ENCODE measurements at regions of chr19 and their contacts with region 1.

Region 1: DNA sequence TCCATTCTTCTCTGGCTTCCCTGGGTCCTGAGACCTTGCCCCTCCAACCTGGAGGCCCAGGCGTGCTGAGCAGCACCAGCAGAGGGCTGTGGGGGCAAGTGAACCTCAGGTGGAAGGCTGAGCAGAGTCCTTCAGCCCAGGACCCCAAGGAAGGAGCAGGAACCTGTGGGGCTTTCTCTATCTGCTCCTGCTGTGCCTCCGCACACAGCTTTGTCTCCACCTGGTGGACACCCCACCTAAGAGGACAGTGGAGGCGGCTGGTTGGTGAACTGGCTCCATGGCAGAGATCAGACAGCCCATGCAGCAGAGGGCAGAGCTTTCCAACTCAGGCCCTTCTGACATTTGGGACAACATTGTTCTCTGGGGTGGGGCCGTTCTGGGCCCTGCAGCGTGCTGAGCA is 19.7 kb downstream of the ZFR2 start:
- DNase-seq: no peak
- H3K4me3 ChIP-seq: no peak overlapping the region
- H3K27ac ChIP-seq: no peak overlapping the region
- H3K4me1 ChIP-seq: no peaks in the 10 kb centered on the region
- H3K27me3 ChIP-seq: no peaks in the 10 kb centered on the region
- CTCF ChIP-seq: peak; percentile 56 to 75 (median 71)
- EP300 ChIP-seq: no peak
- POLR2A ChIP-seq: no peak
- RAD21 ChIP-seq: peak; percentile 41 to 63; a peak in 3 of 4 replicates

Region 2: GRCh38 chr19:3838661-3839060 is 10.4 kb before region 1 on chr19:
- CTCF ChIA-PET with region 1: interaction called, 21 read pairs
- POLR2A ChIA-PET with region 1: no interaction called
- DNase-seq: no peak
- H3K4me3 ChIP-seq: no peak overlapping the region
- H3K27ac ChIP-seq: no peak overlapping the region
- H3K4me1 ChIP-seq: no peaks in the 10 kb centered on the region
- H3K27me3 ChIP-seq: no peaks in the 10 kb centered on the region
- CTCF ChIP-seq: no peak
- EP300 ChIP-seq: no peak
- POLR2A ChIP-seq: no peak
- RAD21 ChIP-seq: no peak

Region 3: DNA sequence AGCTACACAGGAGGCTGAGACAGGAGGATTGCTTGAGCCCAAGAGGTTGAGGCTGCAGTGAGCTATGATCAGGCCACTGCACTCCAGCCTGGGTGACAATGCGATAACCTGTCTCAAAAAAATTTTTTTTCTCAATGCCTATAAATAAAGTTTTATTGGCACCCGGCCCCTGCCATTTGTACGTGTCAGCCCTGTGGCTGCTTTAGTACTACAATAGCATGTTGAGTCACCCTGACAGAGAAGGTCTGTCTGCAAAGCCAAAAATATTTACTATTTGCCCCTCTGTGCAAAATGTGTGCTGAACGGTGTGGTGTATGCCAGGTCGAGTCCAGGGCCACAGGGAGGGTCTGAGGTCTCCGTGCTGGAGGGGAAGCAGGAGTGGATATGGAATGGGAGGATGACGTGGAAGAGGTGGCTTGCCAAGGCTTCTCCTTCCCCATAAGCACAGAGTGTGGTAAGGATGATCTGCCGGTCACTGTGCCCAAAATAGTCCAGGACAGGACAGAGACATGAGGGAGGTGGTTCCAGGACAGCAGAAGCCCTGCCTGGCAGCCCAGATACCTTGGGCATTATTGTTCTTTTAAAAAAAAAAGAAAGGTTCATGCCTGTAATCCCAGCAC is 93.8 kb after region 1 on chr19:
- CTCF ChIA-PET with region 1: no interaction called
- POLR2A ChIA-PET with region 1: no interaction called
- DNase-seq: no peak
- H3K4me3 ChIP-seq: no peak overlapping the region
- H3K27ac ChIP-seq: no peak overlapping the region
- H3K4me1 ChIP-seq: no peaks in the 10 kb centered on the region
- H3K27me3 ChIP-seq: no peaks in the 10 kb centered on the region
- CTCF ChIP-seq: no peak
- EP300 ChIP-seq: no peak
- POLR2A ChIP-seq: no peak
- RAD21 ChIP-seq: no peak

Measured in H1 (cell line).